ENCODE measurements at regions of chr2 and their contacts with region 1.

Region 1: GRCh38 chr2:196233021-196233804 is 61.8 kb upstream of the STK17B start:
- DNase-seq: no peak
- ATAC-seq: peak; percentile 26
- H3K4me3 ChIP-seq: no peak overlapping the region
- H3K27ac ChIP-seq: peak overlapping the region; percentile 50; the same call in 1 of the 2 replicates
- H3K4me1 ChIP-seq: peaks cover 14% of the 10 kb centered on the region
- H3K27me3 ChIP-seq: no peaks in the 10 kb centered on the region
- CTCF ChIP-seq: no peak
- EP300 ChIP-seq: no peak
- POLR2A ChIP-seq: no peak
- RAD21 ChIP-seq: no peak

Region 2: GRCh38 chr2:196101325-196101991 is 131.8 kb before region 1 on chr2:
- CTCF ChIA-PET with region 1: no interaction called
- POLR2A ChIA-PET with region 1: interaction called, 6 read pairs
- RAD21 ChIA-PET with region 1: interaction called, 11 read pairs
- SMC1A ChIA-PET with region 1: interaction called, 20 read pairs
- in situ Hi-C with region 1: no loop called
- intact Hi-C with region 1: no loop called
- DNase-seq: peak; percentile 80
- ATAC-seq: peak; percentile 96
- H3K4me3 ChIP-seq: no peak overlapping the region
- H3K27ac ChIP-seq: peak overlapping the region; percentile 34
- H3K4me1 ChIP-seq: peaks cover 24% of the 10 kb centered on the region
- H3K27me3 ChIP-seq: no peaks in the 10 kb centered on the region
- CTCF ChIP-seq: peak in 1 of 3 experiments; percentile 14; a peak in 1 of 6 replicates
- EP300 ChIP-seq: peak; percentile 57 to 74
- POLR2A ChIP-seq: 0 out of 2 replicates have a peak, but pooled peaks have one; percentile 16
- RAD21 ChIP-seq: peak; percentile 26; the same call in 1 of the 2 replicates

Region 3: DNA sequence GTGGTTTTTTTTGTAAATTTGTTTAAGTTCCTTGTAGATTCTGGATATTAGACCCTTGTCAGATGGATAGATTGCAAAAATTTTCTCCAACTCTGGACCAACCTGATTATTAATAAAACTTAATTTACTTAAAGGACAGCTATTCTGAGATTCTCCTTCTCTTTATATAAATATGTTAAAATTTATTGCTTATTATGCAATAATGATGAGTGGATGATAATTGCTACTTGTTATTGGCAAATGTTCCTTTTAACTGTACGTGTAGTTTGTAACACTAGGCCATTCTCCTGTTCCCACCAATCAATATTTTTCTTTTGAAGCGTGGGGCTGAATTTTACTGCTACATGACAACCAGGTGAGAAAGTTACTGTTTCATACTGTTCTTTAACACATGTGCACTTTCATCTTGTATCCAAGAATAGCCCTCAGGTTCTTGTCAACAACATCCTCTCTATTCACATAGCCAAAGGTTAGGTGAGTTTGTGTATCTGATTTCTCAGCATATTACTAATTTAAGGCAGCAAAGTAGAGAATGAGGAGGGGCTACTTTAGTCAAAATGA is 45.2 kb before region 1 on chr2:
- CTCF ChIA-PET with region 1: interaction called, 14 read pairs
- POLR2A ChIA-PET with region 1: interaction called, 24 read pairs
- RAD21 ChIA-PET with region 1: interaction called, 65 read pairs
- SMC1A ChIA-PET with region 1: interaction called, 143 read pairs
- in situ Hi-C with region 1: no loop called
- intact Hi-C with region 1: no loop called
- DNase-seq: no peak
- ATAC-seq: peak; percentile 29; the same call in 2 of the 3 replicates
- H3K4me3 ChIP-seq: no peak overlapping the region
- H3K27ac ChIP-seq: no peak overlapping the region
- H3K4me1 ChIP-seq: peaks cover 7% of the 10 kb centered on the region
- H3K27me3 ChIP-seq: no peaks in the 10 kb centered on the region
- CTCF ChIP-seq: no peak
- EP300 ChIP-seq: 0 out of 4 replicates have a peak, but pooled peaks of 1 of the 2 experiments have one; percentile 14
- POLR2A ChIP-seq: no peak
- RAD21 ChIP-seq: no peak

Region 4: GRCh38 chr2:196205881-196206435 is 27.3 kb before region 1 on chr2:
- CTCF ChIA-PET with region 1: interaction called, 8 read pairs
- POLR2A ChIA-PET with region 1: interaction called, 10 read pairs
- RAD21 ChIA-PET with region 1: interaction called, 42 read pairs
- SMC1A ChIA-PET with region 1: interaction called, 52 read pairs
- in situ Hi-C with region 1: no loop called
- intact Hi-C with region 1: loop called (anchors 2 kb)
- DNase-seq: no peak
- ATAC-seq: no peak
- H3K4me3 ChIP-seq: no peak overlapping the region
- H3K27ac ChIP-seq: no peak overlapping the region
- H3K4me1 ChIP-seq: peaks cover 22% of the 10 kb centered on the region
- H3K27me3 ChIP-seq: no peaks in the 10 kb centered on the region
- CTCF ChIP-seq: no peak
- EP300 ChIP-seq: no peak
- POLR2A ChIP-seq: no peak
- RAD21 ChIP-seq: no peak

Region 5: DNA sequence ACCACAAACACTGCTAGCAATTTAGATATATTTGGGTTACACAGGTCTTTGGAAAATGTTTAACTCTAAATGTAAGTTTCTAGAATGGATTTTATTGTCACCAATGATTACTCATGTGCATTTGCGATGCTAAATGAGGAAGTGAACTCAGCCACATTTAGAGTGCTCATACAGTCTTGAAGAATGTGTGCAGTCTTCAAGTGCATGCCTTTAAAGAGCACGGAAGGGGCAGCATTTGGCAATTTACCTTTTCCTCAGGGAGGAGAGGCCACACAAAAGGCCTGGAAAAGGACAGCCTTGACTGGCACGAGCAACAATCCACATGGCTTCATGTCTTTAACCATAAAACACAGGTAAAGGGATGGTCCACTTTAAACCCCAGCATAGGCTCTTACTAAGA is 16.6 kb after region 1 on chr2:
- CTCF ChIA-PET with region 1: interaction called, 5 read pairs
- POLR2A ChIA-PET with region 1: interaction called, 11 read pairs
- RAD21 ChIA-PET with region 1: interaction called, 10 read pairs
- SMC1A ChIA-PET with region 1: interaction called, 17 read pairs
- in situ Hi-C with region 1: no loop called
- intact Hi-C with region 1: no loop called
- DNase-seq: no peak
- ATAC-seq: peak; percentile 92
- H3K4me3 ChIP-seq: no peak overlapping the region
- H3K27ac ChIP-seq: no peak overlapping the region
- H3K4me1 ChIP-seq: peaks cover 4% of the 10 kb centered on the region
- H3K27me3 ChIP-seq: no peaks in the 10 kb centered on the region
- CTCF ChIP-seq: no peak
- EP300 ChIP-seq: no peak; a peak in 1 of 4 replicates
- POLR2A ChIP-seq: no peak
- RAD21 ChIP-seq: peak; percentile 10; the same call in 1 of the 2 replicates

Region 6: GRCh38 chr2:196268538-196269338 is 35.5 kb after region 1 on chr2:
- CTCF ChIA-PET with region 1: interaction called, 23 read pairs
- POLR2A ChIA-PET with region 1: interaction called, 6 read pairs
- RAD21 ChIA-PET with region 1: interaction called, 102 read pairs
- SMC1A ChIA-PET with region 1: interaction called, 84 read pairs
- in situ Hi-C with region 1: no loop called
- intact Hi-C with region 1: no loop called
- DNase-seq: no peak
- ATAC-seq: peak; percentile 61
- H3K4me3 ChIP-seq: no peak overlapping the region
- H3K27ac ChIP-seq: peak overlapping the region; percentile 40
- H3K4me1 ChIP-seq: peaks cover 18% of the 10 kb centered on the region
- H3K27me3 ChIP-seq: no peaks in the 10 kb centered on the region
- CTCF ChIP-seq: no peak
- EP300 ChIP-seq: no peak
- POLR2A ChIP-seq: no peak
- RAD21 ChIP-seq: no peak

Measured in GM12878 (cell line).